Activated CD4-positive, alpha-beta T cell treated with anti-CD3 and anti-CD28 coated beads for 36 hours (primary cell): ENCODE measurements at regions of chr12 and their contacts with region 1.

Region 1: GRCh38 chr12:108633534-108634248 is at the start of gene SELPLG:
- DNase-seq: peak; percentile 92
- ATAC-seq: peak; percentile 53
- H3K4me3 Mint-ChIP-seq: peak within 1 kb of the TSS; percentile 81
- H3K27ac Mint-ChIP-seq: peak within 1 kb of the TSS; percentile 99
- H3K4me1 Mint-ChIP-seq: peaks cover 61% of the 10 kb centered on the region
- H3K27me3 Mint-ChIP-seq: no peaks in the 10 kb centered on the region
- total RNA-seq, gene SELPLG: 31.0 to 36.9 TPM

Region 2: DNA sequence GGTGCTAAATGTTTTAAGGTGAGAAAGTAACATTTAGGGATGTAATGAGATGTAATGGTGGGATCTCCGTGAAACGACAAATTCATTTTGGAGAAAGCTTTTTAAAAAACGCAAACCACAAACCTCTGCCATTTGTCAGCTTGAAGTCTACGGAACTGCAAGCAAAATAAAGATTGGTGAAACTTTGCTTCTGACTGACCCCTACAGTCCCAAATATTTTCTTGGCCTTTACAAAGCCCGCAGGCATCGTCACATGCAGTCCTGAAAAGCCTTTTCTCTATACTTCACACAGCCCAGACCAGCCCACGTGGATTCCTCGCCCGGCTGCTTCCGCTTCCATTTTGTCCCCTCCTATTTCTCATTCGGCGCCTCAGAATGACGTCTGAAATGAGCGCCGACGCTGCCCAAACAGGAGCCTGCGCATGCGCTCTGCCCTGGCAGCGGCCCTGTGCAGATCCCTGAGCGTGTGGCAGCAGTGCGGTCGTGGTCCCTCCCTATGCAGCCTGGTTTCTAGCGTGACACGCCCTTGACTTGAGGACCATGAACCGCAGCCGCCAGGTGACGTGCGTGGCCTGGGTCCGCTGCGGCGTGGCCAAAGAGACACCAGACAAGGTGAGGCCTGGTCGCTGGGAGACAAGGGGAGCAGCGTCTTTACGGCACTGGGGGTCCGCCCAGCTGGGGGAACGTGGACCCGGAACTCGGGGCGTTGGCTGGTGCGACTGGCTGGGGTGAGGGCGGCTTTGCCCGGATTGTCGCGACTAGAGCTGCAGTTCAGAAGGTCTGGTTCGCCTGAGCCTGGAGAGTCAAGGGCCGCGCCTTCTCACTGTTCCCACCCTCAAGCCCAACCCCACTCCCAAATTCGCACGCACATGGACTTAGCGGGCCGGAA is 948.1 kb before region 1 on chr12 and contains the start of gene PWP1:
- CTCF ChIA-PET with region 1: no interaction called
- POLR2A ChIA-PET with region 1: no interaction called
- intact Hi-C with region 1: loop called in 1 of 2 experiments (anchors 10 kb)
- DNase-seq: peak; percentile 97
- ATAC-seq: peak; percentile 92
- H3K4me3 Mint-ChIP-seq: peak within 1 kb of the TSS; percentile 94
- H3K27ac Mint-ChIP-seq: peak within 1 kb of the TSS; percentile 94
- H3K4me1 Mint-ChIP-seq: peaks cover 27% of the 10 kb centered on the region
- H3K27me3 Mint-ChIP-seq: no peaks in the 10 kb centered on the region
- total RNA-seq, gene PWP1: 59.5 to 60.0 TPM

Region 3: DNA sequence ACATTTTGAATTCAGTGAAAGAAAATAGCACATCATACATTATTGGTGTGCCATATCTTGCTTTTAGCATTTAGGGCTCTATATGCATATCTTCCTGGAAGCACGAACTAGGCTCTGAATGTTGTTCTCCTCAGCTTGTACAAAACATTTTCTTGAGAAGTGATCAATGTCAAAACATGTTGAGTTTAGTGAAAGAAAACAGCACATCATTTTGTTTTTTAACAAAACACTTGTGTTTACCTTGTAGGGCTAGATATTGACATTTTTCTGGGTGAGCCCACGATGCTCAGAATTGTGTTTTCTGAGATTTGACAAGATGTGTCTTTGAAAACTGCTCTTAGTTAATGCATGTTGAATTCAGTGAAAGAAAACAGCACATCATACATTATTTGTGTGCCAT is 778.2 kb before region 1 on chr12:
- CTCF ChIA-PET with region 1: no interaction called
- POLR2A ChIA-PET with region 1: no interaction called
- intact Hi-C with region 1: no loop called
- DNase-seq: no peak
- ATAC-seq: no peak
- H3K4me3 Mint-ChIP-seq: no peak overlapping the region
- H3K27ac Mint-ChIP-seq: no peak overlapping the region
- H3K4me1 Mint-ChIP-seq: no peaks in the 10 kb centered on the region
- H3K27me3 Mint-ChIP-seq: peaks cover 25% of the 10 kb centered on the region

Region 4: GRCh38 chr12:108381787-108382436 is 251.8 kb before region 1 on chr12:
- CTCF ChIA-PET with region 1: no interaction called
- POLR2A ChIA-PET with region 1: no interaction called
- intact Hi-C with region 1: no loop called
- DNase-seq: peak; percentile 8
- ATAC-seq: no peak
- H3K4me3 Mint-ChIP-seq: no peak overlapping the region
- H3K27ac Mint-ChIP-seq: no peak overlapping the region
- H3K4me1 Mint-ChIP-seq: no peaks in the 10 kb centered on the region
- H3K27me3 Mint-ChIP-seq: peaks cover 3% of the 10 kb centered on the region

Region 5: GRCh38 chr12:108505129-108505528 is 128.6 kb before region 1 on chr12:
- CTCF ChIA-PET with region 1: no interaction called
- POLR2A ChIA-PET with region 1: no interaction called
- intact Hi-C with region 1: no loop called
- DNase-seq: no peak
- ATAC-seq: no peak
- H3K4me3 Mint-ChIP-seq: no peak overlapping the region
- H3K27ac Mint-ChIP-seq: no peak overlapping the region
- H3K4me1 Mint-ChIP-seq: peaks cover 7% of the 10 kb centered on the region
- H3K27me3 Mint-ChIP-seq: peaks cover 9% of the 10 kb centered on the region

Region 6: DNA sequence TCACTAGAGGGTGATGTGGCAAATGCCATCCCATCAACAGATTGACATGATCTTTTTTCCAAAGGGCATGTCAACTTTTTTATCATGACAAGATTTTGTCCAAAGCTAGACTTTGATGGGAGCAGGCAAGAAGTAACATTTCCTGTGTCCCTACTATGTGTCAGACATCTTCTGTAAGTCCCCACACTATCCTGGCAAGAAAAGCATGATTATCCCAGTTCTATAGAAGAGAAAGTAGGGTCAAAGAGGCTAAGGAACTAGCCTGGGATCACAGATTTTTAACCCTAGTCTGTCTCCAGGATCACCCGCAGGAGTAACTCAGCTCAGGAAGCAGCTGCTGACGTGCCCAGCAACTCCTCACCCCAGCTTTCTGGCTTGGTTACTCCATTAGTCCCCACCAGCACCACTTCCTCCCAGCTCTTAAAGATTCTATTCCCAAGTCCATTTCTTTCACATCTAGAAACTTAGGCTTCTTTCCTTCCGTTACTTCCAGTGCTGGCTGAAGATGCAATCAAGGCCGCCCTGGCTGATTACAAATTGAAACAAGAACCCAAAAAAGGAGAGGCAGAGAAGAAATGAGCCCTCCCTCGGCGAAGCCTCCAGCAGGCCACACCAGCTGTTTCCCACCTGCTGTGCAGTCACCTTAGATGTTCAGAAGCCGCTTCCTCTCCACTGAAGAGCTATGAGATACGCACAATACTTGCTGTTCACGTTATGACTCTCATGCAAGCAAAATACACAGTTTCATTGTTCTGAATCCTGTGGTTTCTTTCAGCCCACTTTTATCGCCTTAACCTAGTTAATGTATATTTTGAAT is 65.1 kb before region 1 on chr12:
- CTCF ChIA-PET with region 1: interaction called, 12 read pairs
- POLR2A ChIA-PET with region 1: interaction called, 4 read pairs
- intact Hi-C with region 1: loop called (anchors 1 kb)
- DNase-seq: peak; percentile 86
- ATAC-seq: peak; percentile 87
- H3K4me3 Mint-ChIP-seq: peak overlapping the region; percentile 29
- H3K27ac Mint-ChIP-seq: peak overlapping the region; percentile 89
- H3K4me1 Mint-ChIP-seq: peaks cover 84% of the 10 kb centered on the region
- H3K27me3 Mint-ChIP-seq: no peaks in the 10 kb centered on the region

Region 7: DNA sequence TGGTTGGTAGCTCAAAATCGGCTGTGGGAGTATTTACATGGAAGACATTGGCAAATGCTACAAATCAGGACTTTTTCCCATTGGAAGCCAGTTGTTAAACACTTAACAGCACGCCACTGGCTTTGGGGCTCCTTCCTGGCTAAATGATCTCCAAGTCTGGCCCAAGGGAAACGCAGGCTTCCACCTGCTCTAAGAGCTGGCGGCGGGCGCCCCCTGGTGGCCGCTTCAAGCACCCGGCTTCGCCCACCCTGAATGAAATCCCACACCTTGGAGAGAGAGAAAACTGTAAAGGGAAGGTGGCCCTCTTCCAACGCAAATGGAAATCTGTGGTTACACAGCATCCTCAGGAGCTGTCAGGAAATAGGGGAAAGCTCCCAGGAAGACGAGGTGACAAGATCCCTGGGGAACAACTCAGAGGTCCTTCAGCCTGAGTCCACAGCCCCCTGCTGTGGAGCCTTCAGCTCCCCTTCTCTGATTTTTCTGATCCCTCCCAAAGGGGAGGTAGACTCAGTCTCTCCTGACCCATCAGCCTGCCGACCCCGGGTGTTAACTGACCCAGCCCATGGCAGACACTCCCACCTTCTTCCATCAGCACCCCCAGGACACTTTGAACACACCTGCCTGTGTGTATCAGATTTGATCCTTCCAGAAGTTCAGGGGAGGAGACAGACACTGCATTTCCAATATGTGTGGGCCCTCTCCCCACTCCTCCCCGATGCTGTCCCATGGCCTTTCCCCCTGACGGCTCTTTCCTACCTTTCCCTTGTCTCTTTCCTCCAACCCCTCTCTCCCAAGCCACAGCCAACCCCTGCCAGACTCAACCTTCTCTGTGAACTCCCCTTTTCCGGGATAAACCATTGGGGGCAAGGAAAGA is 15.4 kb before region 1 on chr12:
- CTCF ChIA-PET with region 1: interaction called, 140 read pairs
- POLR2A ChIA-PET with region 1: interaction called, 8 read pairs
- intact Hi-C with region 1: loop called in 1 of 2 experiments (anchors 1 kb)
- DNase-seq: peak; percentile 88
- ATAC-seq: peak; percentile 46
- H3K4me3 Mint-ChIP-seq: no peak overlapping the region
- H3K27ac Mint-ChIP-seq: peak overlapping the region; percentile 62
- H3K4me1 Mint-ChIP-seq: peaks cover 40% of the 10 kb centered on the region
- H3K27me3 Mint-ChIP-seq: no peaks in the 10 kb centered on the region

Region 8: DNA sequence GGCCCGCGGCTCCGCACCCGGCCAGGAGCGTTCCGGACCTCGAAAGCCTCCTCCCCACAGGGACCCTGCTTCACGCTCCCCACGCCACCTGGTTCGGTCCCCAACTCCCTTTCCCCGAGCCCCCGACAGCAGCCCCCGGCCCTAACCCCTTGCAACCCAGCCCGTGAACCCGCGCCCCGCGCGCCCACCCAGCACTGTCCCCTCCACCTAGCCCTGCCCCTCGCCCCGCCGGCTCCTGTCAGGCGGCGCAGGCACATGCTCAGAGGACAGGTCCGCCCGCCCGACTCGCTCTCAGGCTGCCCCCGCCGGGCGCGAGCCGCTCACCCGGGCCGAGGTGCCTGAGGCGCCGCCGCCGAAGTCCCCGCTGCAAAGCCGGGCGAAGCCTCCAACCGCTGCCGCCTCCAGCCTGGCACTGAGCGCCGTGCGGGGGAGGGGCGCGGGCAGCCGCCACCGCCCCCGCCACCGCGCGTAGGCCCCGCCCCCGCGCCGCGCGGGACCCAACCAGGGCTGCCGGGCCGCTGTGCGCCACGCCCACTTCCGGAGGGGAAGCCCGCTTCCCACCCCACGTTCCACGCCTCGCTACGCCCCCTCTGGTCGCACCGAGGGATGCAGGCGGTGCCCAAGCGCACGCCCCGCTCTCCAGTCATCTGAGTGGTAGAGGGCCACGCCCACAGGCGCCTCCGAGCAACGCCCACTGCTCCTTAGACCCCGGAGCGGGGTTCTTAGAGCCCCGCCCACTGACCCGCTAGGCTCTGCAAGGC is 97.6 kb after region 1 on chr12 and contains the start of gene CORO1C:
- CTCF ChIA-PET with region 1: no interaction called
- POLR2A ChIA-PET with region 1: interaction called, 3 read pairs
- intact Hi-C with region 1: loop called (anchors 1 to 5 kb)
- DNase-seq: peak; percentile 98
- ATAC-seq: peak; percentile 78
- H3K4me3 Mint-ChIP-seq: peak within 1 kb of the TSS; percentile 88
- H3K27ac Mint-ChIP-seq: peak within 1 kb of the TSS; percentile 93
- H3K4me1 Mint-ChIP-seq: peaks cover 36% of the 10 kb centered on the region
- H3K27me3 Mint-ChIP-seq: no peaks in the 10 kb centered on the region
- total RNA-seq, gene CORO1C: 83.5 to 90.8 TPM

Region 9: DNA sequence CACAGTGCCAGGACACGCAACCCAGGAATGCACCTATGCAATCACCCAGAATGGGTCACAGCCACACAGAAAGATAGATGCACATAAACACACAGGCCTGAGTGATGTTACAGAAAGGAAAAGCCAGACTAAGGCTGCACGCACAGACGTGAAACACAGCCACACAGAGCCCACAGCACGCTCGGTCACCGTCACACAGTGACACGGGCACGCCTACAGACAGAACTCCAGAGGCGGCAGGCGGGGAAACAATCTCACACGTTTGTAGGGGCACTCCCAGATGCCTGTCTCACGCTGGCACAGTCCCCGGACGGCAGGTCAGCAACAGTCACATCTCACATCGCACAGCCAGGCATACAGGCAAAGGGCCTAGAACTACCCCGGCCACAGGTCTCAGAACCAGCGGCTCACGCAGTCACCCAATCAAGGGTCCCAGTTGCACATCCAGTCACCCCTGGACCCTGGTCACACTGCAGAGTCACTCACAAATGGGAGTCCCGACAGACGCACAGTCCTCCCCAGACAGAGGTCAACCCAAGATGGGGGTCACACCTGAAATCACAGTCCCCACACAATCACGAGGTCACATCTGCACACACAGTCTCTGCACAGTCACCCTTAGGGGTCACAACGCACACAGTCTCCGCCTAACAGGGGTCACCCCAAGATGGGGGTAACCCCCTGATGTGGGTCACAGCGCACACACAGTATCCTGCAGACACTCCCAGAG is 222.9 kb after region 1 on chr12:
- CTCF ChIA-PET with region 1: interaction called, 3 read pairs
- POLR2A ChIA-PET with region 1: no interaction called
- intact Hi-C with region 1: loop called (anchors 2 kb)
- DNase-seq: peak; percentile 81
- ATAC-seq: peak; percentile 64
- H3K4me3 Mint-ChIP-seq: peak overlapping the region; percentile 82
- H3K27ac Mint-ChIP-seq: peak overlapping the region; percentile 86
- H3K4me1 Mint-ChIP-seq: peaks cover 43% of the 10 kb centered on the region
- H3K27me3 Mint-ChIP-seq: peaks cover 2% of the 10 kb centered on the region

Region 10: GRCh38 chr12:109052414-109053323 is 419.0 kb after region 1 on chr12 and contains the start of gene USP30:
- CTCF ChIA-PET with region 1: no interaction called
- POLR2A ChIA-PET with region 1: no interaction called
- intact Hi-C with region 1: loop called in 1 of 2 experiments (anchors 2 kb)
- DNase-seq: peak; percentile 91
- ATAC-seq: peak; percentile 70
- H3K4me3 Mint-ChIP-seq: peak within 1 kb of the TSS; percentile 86
- H3K27ac Mint-ChIP-seq: peak within 1 kb of the TSS; percentile 97
- H3K4me1 Mint-ChIP-seq: peaks cover 6% of the 10 kb centered on the region
- H3K27me3 Mint-ChIP-seq: no peaks in the 10 kb centered on the region
- total RNA-seq, gene USP30: 9.2 to 14.5 TPM